ENCODE measurements at regions of chrX and their contacts with region 1.

Region 1: DNA sequence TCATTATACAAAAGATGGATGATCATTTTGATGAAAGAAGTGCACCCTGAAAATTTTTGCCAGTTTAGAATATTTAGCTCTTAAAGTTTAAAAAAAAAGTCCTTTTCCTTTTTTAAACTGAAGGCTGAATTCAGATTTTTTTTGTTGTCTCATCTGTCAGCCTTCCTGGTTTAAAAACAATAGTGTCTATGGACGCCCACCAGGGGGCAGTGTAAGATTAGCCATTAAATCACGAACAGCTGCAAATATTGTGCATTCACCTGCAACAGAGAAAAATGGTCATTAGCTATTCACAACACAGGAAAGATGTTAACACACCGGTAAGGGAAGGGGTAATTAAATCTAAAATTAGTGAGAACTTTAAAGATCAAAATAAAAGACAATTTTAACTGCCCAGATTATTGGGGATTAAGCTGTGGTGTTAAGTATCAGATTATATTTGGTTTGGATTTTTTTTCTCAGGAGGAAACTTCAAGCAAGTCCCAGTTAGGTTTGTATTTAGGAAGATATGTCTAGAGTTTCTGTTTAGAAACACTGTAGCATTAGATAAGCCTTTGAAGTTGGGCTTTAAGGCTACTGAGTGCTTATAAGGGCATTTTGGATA is 4.4 kb upstream of the CXorf38 start:
- DNase-seq: peak; percentile 49 to 67
- H3K4me3 ChIP-seq: no peak overlapping the region
- H3K4me3 Mint-ChIP-seq: no peak overlapping the region
- H3K27ac Mint-ChIP-seq: no peak overlapping the region
- H3K4me1 ChIP-seq: no peaks in the 10 kb centered on the region
- H3K4me1 Mint-ChIP-seq: no peaks in the 10 kb centered on the region
- H3K27me3 ChIP-seq: no peaks in the 10 kb centered on the region
- H3K27me3 Mint-ChIP-seq: no peaks in the 10 kb centered on the region
- CTCF ChIP-seq: peak; percentile 34 to 51

Region 2: DNA sequence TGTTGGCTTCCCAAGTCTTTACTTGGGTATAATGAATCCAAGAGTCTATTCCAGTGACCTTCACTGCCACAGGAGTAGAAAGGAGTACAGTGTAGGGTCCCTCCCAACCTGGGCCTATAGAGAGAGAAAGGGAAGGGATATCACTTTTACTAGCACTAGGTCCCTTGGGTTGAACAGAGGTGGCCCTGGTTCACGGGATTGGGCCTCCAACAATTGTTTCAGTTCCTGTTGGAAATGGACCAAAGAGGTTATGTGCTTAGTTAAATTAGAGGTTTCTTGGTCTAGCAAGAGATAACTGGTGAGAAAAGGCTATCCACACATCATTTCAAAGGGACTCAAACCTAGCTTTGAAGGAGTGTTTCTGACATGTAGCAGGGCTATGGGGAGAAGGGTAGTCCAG is 140.7 kb after region 1 on chrX:
- CTCF ChIA-PET with region 1: interaction called, 5 read pairs
- POLR2A ChIA-PET with region 1: no interaction called
- intact Hi-C with region 1: loop called (anchors 1 kb)
- DNase-seq: no peak
- H3K4me3 ChIP-seq: no peak overlapping the region
- H3K4me3 Mint-ChIP-seq: no peak overlapping the region
- H3K27ac Mint-ChIP-seq: no peak overlapping the region
- H3K4me1 ChIP-seq: no peaks in the 10 kb centered on the region
- H3K4me1 Mint-ChIP-seq: no peaks in the 10 kb centered on the region
- H3K27me3 ChIP-seq: no peaks in the 10 kb centered on the region
- H3K27me3 Mint-ChIP-seq: peaks cover 3% of the 10 kb centered on the region
- CTCF ChIP-seq: no peak

Region 3: GRCh38 chrX:40922307-40922706 is 270.6 kb after region 1 on chrX:
- CTCF ChIA-PET with region 1: no interaction called
- POLR2A ChIA-PET with region 1: no interaction called
- intact Hi-C with region 1: loop called (anchors 1 kb)
- DNase-seq: peak; percentile 35 to 48
- H3K4me3 ChIP-seq: no peak overlapping the region
- H3K4me3 Mint-ChIP-seq: no peak overlapping the region
- H3K27ac Mint-ChIP-seq: no peak overlapping the region
- H3K4me1 ChIP-seq: no peaks in the 10 kb centered on the region
- H3K4me1 Mint-ChIP-seq: peaks cover 7% of the 10 kb centered on the region
- H3K27me3 ChIP-seq: no peaks in the 10 kb centered on the region
- H3K27me3 Mint-ChIP-seq: no peaks in the 10 kb centered on the region
- CTCF ChIP-seq: peak in 1 of 2 experiments; percentile 27

Region 4: DNA sequence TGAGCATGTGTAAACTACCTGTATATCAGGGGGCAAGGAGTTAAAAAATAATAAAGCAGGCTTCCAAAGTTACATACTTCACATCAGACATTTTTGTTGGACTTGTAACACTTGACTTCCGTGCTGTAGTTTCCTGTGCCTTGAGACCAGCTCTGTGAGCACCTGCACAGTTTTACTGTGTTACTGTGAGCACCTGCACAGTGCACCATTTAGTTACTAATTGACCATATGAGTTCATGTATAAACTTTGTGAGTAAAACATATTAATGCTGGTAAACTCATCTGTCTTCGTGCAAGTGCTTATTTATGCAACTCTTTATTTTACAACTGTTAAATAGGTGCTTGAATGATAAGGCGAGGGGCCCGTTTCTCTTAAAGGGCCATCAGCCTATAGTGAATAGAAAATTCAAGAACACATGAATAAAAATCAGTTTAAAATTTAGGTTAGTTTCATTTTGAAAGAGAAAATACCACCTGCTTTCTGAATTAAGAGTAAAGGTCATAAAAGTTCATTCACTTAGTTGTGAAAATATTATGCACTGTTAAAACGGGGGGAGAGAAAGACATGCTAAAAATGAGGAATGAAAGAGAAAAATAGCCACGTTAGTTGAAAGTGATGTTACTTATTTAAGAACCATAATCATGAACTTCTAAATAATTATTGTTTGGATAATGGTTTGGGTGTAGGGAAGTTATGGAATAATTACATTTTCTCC is 475.9 kb after region 1 on chrX:
- CTCF ChIA-PET with region 1: no interaction called
- POLR2A ChIA-PET with region 1: no interaction called
- intact Hi-C with region 1: loop called (anchors 10 kb)
- DNase-seq: no peak
- H3K4me3 ChIP-seq: no peak overlapping the region
- H3K4me3 Mint-ChIP-seq: no peak overlapping the region
- H3K27ac Mint-ChIP-seq: no peak overlapping the region
- H3K4me1 ChIP-seq: no peaks in the 10 kb centered on the region
- H3K4me1 Mint-ChIP-seq: peaks cover 6% of the 10 kb centered on the region
- H3K27me3 ChIP-seq: no peaks in the 10 kb centered on the region
- H3K27me3 Mint-ChIP-seq: no peaks in the 10 kb centered on the region
- CTCF ChIP-seq: no peak

Region 5: GRCh38 chrX:41259516-41259915 is 607.8 kb after region 1 on chrX:
- CTCF ChIA-PET with region 1: no interaction called
- POLR2A ChIA-PET with region 1: no interaction called
- intact Hi-C with region 1: loop called (anchors 10 kb)
- DNase-seq: no peak
- H3K4me3 ChIP-seq: no peak overlapping the region
- H3K4me3 Mint-ChIP-seq: no peak overlapping the region
- H3K27ac Mint-ChIP-seq: no peak overlapping the region
- H3K4me1 ChIP-seq: no peaks in the 10 kb centered on the region
- H3K4me1 Mint-ChIP-seq: no peaks in the 10 kb centered on the region
- H3K27me3 ChIP-seq: no peaks in the 10 kb centered on the region
- H3K27me3 Mint-ChIP-seq: no peaks in the 10 kb centered on the region
- CTCF ChIP-seq: no peak